ENCODE measurements at regions of chr13 and their contacts with region 1.

Region 1: GRCh38 chr13:31044377-31045285 is 112.2 kb downstream of the TEX26 start:
- DNase-seq: peak; percentile 65 to 89 (median 74)
- ATAC-seq: peak; percentile 85
- H3K4me3 ChIP-seq: no peak overlapping the region
- H3K4me3 Mint-ChIP-seq: no peak overlapping the region
- H3K27ac ChIP-seq: peak overlapping the region; percentile 15 to 50
- H3K27ac Mint-ChIP-seq: peak overlapping the region; percentile 36
- H3K4me1 ChIP-seq: peaks cover 45% of the 10 kb centered on the region
- H3K4me1 Mint-ChIP-seq: peaks cover 45% of the 10 kb centered on the region
- H3K27me3 ChIP-seq: peaks cover 0 to 5% of the 10 kb centered on the region in 2 experiments
- H3K27me3 Mint-ChIP-seq: peaks cover 5% of the 10 kb centered on the region
- CTCF ChIP-seq: peak; percentile 98

Region 2: DNA sequence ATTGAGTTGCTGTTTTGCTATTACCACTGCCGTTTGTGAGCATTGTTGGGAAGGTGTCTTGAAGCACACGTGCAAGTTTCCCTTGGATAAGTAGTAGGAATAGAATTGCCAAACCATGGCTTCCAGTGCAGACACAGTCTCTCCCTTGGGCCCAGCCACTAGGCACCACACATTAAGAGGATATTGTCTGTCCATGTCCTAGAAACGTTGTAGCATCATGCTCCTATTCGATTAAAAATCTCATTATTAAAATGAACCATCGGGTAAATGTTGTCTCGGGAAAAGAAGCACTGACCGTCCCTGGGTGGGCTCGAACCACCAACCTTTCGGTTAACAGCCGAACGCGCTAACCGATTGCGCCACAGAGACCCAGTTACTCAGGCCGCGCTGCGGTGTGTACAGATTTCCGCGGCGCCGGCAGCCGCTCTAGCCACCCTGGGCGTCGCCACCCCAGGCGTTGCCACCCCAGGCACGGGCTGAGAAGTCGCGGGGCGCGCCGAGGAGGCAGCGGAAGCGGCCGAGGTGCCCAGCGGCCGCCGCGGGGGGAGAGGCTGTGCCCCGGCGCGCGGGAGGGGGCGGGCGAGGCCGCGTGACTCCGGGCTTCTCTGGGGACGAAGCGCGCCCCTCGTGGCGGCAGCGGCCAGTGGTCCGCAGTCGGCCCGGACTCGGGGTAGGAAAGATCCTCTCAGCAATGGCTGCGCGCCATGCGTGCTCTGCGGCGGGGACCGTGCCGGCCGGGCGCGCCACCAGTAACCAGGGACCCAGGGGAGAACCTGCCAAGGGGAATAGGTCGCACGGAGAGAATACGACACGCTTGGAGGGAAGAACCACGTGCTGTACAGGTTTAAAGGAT is 370.7 kb before region 1 on chr13:
- CTCF ChIA-PET with region 1: no interaction called
- POLR2A ChIA-PET with region 1: no interaction called
- intact Hi-C with region 1: loop called in 1 of 2 experiments (anchors 10 kb)
- DNase-seq: peak; percentile 74 to 94 (median 85)
- ATAC-seq: peak; percentile 90
- H3K4me3 ChIP-seq: peak overlapping the region; percentile 61
- H3K4me3 Mint-ChIP-seq: peak overlapping the region; percentile 94
- H3K27ac ChIP-seq: peak overlapping the region in 1 of 2 donors; percentile 11
- H3K27ac Mint-ChIP-seq: peak overlapping the region; percentile 93
- H3K4me1 ChIP-seq: peaks cover 11% of the 10 kb centered on the region
- H3K4me1 Mint-ChIP-seq: peaks cover 25% of the 10 kb centered on the region
- H3K27me3 ChIP-seq: no peaks in the 10 kb centered on the region
- H3K27me3 Mint-ChIP-seq: peaks cover 6% of the 10 kb centered on the region
- CTCF ChIP-seq: peak; percentile 45

Region 3: GRCh38 chr13:30865123-30866049 is 179.2 kb before region 1 on chr13:
- CTCF ChIA-PET with region 1: no interaction called
- POLR2A ChIA-PET with region 1: no interaction called
- intact Hi-C with region 1: loop called in 1 of 2 experiments (anchors 5 kb)
- DNase-seq: peak; percentile 15 to 74 (median 36)
- ATAC-seq: peak; percentile 94
- H3K4me3 ChIP-seq: no peak overlapping the region
- H3K4me3 Mint-ChIP-seq: no peak overlapping the region
- H3K27ac ChIP-seq: no peak overlapping the region
- H3K27ac Mint-ChIP-seq: no peak overlapping the region
- H3K4me1 ChIP-seq: peaks cover 5% of the 10 kb centered on the region
- H3K4me1 Mint-ChIP-seq: peaks cover 5% of the 10 kb centered on the region
- H3K27me3 ChIP-seq: peaks cover 0 to 4% of the 10 kb centered on the region in 2 experiments
- H3K27me3 Mint-ChIP-seq: peaks cover 20% of the 10 kb centered on the region
- CTCF ChIP-seq: peak; percentile 89

Region 4: DNA sequence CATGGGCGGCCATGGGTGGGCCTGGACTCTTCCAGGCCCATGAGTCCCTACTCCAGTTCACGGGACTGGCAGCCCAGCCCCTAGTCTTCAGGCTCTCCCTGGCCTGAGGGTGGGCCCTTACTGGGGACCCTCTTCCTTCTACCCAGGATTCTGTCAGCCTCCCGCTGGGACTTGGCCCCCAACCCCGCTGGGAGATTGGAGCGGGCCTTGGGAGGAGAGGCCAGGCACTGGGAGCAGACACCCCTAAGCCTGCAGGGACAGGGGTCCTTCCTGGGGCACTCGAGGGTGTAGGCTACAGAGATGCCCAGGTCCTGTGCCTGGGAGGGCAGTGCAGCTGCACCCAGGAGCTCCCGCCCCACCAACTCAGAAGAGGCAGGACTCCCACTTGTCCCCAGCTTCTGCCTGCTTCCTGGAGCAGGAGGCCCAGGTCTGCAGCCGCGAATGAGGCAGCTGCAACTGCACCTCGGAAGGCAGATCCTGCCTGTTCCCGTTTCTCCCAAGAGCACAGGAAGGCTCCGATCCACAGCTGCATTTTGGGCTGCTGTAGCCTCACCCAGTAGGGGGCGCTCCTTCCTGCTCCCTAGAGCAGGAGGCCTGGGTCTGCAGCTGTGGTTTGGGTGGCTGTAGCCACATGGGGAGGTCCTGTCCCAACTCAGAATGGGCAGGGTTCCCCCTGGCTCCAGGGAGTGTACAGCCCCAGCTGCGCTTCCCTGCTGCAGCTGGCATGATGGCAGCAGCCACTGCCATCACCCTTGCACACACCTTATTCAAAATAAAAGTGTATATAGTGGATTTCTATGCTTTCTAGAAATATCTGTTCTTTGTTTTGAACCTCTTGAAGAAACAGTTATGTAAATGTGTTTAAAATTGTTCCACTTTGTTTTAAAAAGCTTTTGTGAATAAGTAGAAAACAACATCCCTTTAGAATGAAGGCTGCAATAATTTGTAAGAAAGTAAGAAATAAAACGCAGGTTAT is 65.4 kb before region 1 on chr13:
- CTCF ChIA-PET with region 1: interaction called, 9 read pairs
- POLR2A ChIA-PET with region 1: no interaction called
- intact Hi-C with region 1: loop called (anchors 1 to 2 kb)
- DNase-seq: peak in 11 of 14 experiments; percentile 2 to 62 (median 30)
- ATAC-seq: no peak
- H3K4me3 ChIP-seq: no peak overlapping the region
- H3K4me3 Mint-ChIP-seq: no peak overlapping the region
- H3K27ac ChIP-seq: no peak overlapping the region
- H3K27ac Mint-ChIP-seq: no peak overlapping the region
- H3K4me1 ChIP-seq: peaks cover 3% of the 10 kb centered on the region
- H3K4me1 Mint-ChIP-seq: no peaks in the 10 kb centered on the region
- H3K27me3 ChIP-seq: no peaks in the 10 kb centered on the region
- H3K27me3 Mint-ChIP-seq: peaks cover 5% of the 10 kb centered on the region
- CTCF ChIP-seq: peak; percentile 67

Region 5: GRCh38 chr13:31161828-31162590 is 117.4 kb after region 1 on chr13 and contains the start of gene HSPH1:
- CTCF ChIA-PET with region 1: no interaction called
- POLR2A ChIA-PET with region 1: no interaction called
- intact Hi-C with region 1: loop called in 1 of 2 experiments (anchors 5 kb)
- DNase-seq: peak; percentile 95 to 99 (median 98)
- ATAC-seq: peak; percentile 81
- H3K4me3 ChIP-seq: peak within 1 kb of the TSS; percentile 93
- H3K4me3 Mint-ChIP-seq: peak within 1 kb of the TSS; percentile 96
- H3K27ac ChIP-seq: peak within 1 kb of the TSS; percentile 94 to 95
- H3K27ac Mint-ChIP-seq: peak within 1 kb of the TSS; percentile 98
- H3K4me1 ChIP-seq: peaks cover 17% of the 10 kb centered on the region
- H3K4me1 Mint-ChIP-seq: peaks cover 46% of the 10 kb centered on the region
- H3K27me3 ChIP-seq: no peaks in the 10 kb centered on the region
- H3K27me3 Mint-ChIP-seq: no peaks in the 10 kb centered on the region
- CTCF ChIP-seq: peak; percentile 13
- total RNA-seq, gene HSPH1: 226 to 238 TPM

Region 6: GRCh38 chr13:31610270-31610998 is 565.8 kb after region 1 on chr13:
- CTCF ChIA-PET with region 1: no interaction called
- POLR2A ChIA-PET with region 1: no interaction called
- intact Hi-C with region 1: no loop called
- DNase-seq: no peak
- ATAC-seq: no peak
- H3K4me3 ChIP-seq: no peak overlapping the region
- H3K4me3 Mint-ChIP-seq: no peak overlapping the region
- H3K27ac ChIP-seq: no peak overlapping the region
- H3K27ac Mint-ChIP-seq: no peak overlapping the region
- H3K4me1 ChIP-seq: no peaks in the 10 kb centered on the region
- H3K4me1 Mint-ChIP-seq: no peaks in the 10 kb centered on the region
- H3K27me3 ChIP-seq: no peaks in the 10 kb centered on the region
- H3K27me3 Mint-ChIP-seq: no peaks in the 10 kb centered on the region
- CTCF ChIP-seq: no peak